Prostate gland (tissue), 2 donors: ENCODE measurements at regions of chr4 and their contacts with region 1.

Region 1: DNA sequence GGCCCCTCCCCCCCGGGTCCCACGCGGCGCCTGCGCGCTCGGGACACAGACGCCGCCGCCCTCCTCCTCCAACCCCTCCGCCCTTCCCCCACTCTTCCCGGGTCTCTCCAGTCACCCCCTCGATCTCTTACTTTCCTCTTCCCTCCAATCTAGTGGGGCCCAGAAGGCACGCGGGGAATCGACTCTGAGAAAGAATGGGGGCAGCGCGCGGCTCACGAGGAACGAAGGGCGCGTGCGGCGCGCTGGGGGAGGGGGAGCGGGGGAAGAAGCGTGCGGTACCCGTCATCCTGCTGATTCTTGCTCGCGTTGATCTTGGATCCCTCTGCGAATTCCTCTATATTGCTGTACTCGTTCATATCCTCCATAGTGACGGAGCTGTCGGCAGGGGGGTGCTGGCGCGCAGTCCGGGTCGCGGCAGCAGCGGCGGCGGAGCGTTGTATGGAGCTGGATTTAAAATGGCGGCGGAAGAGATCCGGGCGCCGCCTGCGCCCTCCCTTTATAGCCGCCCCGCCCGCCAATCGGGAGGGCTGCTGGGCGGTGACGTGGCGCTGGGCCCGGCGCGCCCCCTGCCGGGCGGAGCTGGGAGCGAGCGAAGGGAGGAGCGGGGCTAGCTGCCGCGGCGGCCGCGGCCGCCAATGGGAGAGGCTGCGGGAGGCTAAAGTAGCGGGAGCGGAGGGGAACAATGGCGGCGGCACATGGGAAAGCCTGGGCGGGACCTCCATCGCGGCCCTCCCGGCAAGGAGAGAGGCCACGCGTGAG is 1.1 kb downstream of the HNRNPDL start:
- DNase-seq: peak; percentile 90
- H3K4me3 ChIP-seq: peak overlapping the region; percentile 90 to 96
- H3K27ac ChIP-seq: peak overlapping the region; percentile 98
- H3K4me1 ChIP-seq: peaks cover 3% of the 10 kb centered on the region
- H3K27me3 ChIP-seq: no peaks in the 10 kb centered on the region
- CTCF ChIP-seq: peak; percentile 95 to 100 (median 99)
- POLR2A ChIP-seq: peak; percentile 79

Region 2: GRCh38 chr4:82469791-82470345 is 40.7 kb after region 1 on chr4:
- intact Hi-C with region 1: no loop called
- DNase-seq: no peak
- H3K4me3 ChIP-seq: no peak overlapping the region
- H3K27ac ChIP-seq: no peak overlapping the region
- H3K4me1 ChIP-seq: no peaks in the 10 kb centered on the region
- H3K27me3 ChIP-seq: no peaks in the 10 kb centered on the region
- CTCF ChIP-seq: no peak
- POLR2A ChIP-seq: no peak

Region 3: GRCh38 chr4:82890901-82891706 is 462.0 kb after region 1 on chr4 and contains the start of gene SEC31A:
- intact Hi-C with region 1: loop called (anchors 2 kb)
- DNase-seq: peak; percentile 96
- H3K4me3 ChIP-seq: peak within 1 kb of the TSS; percentile 56 to 79
- H3K27ac ChIP-seq: peak within 1 kb of the TSS; percentile 93 to 98
- H3K4me1 ChIP-seq: no peaks in the 10 kb centered on the region
- H3K27me3 ChIP-seq: no peaks in the 10 kb centered on the region
- CTCF ChIP-seq: peak in 2 of 4 experiments; percentile 11 to 31
- POLR2A ChIP-seq: peak; percentile 95
- total RNA-seq, gene SEC31A: 191 to 196 TPM